B cell (primary cell): ENCODE measurements at regions of chrX and their contacts with region 1.

Region 1: DNA sequence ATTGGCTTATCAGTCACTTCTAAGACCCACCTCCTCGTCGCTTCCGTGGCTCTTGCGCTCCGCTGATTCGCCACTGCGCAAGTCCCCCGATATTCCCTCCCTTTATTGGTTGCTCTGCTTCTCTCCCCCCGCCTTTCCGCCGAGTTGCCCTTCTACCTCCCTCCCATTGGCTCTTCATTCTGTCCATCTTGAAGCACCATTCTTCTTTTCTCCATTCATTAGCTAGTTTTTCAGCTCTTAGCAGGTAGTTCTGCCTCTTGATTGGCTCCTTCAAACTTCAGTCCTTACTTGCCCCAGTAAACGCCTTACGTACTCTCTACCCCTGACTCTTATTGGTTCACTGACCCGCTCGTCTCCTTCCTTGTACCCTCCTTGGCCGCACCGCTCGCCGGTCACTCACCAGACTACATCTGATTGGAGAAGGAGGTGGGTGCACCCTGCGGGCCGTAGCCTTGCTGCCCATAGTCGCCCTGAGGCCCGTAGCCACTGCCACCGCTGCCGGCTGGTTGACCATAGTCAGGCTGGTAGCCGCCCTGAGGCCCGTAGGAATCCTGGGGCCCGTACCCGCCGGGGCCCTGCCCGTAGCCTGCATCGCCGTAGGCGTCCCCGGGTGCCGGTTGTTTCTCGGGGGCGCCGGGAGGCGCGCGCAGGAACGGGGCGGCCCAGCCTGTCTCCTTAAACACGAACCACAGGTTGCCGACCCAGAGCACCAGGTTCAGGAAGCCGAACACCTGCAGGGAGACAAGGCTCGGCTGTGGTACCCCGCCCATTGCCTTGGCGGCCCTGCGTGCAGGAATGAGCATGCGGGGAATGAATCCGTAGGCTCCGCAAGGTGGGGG is 5.1 kb upstream of the PRICKLE3 start:
- DNase-seq: peak; percentile 95
- ATAC-seq: peak; percentile 84
- H3K4me3 ChIP-seq: peak overlapping the region in 4 of 5 experiments; percentile 62 to 78 (median 70)
- H3K4me3 Mint-ChIP-seq: peak overlapping the region; percentile 95
- H3K27ac ChIP-seq: peak overlapping the region; percentile 55 to 71
- H3K27ac Mint-ChIP-seq: peak overlapping the region; percentile 96
- H3K4me1 ChIP-seq: peaks cover 0 to 20% of the 10 kb centered on the region in 2 donors
- H3K4me1 Mint-ChIP-seq: peaks cover 28% of the 10 kb centered on the region
- H3K27me3 ChIP-seq: no peaks in the 10 kb centered on the region
- H3K27me3 Mint-ChIP-seq: no peaks in the 10 kb centered on the region
- CTCF ChIP-seq: no peak

Region 2: GRCh38 chrX:49120099-49120498 is 71.2 kb before region 1 on chrX:
- CTCF ChIA-PET with region 1: no interaction called
- POLR2A ChIA-PET with region 1: no interaction called
- intact Hi-C with region 1: loop called (anchors 1 kb)
- DNase-seq: no peak
- ATAC-seq: no peak
- H3K4me3 ChIP-seq: no peak overlapping the region
- H3K4me3 Mint-ChIP-seq: peak overlapping the region; percentile 0
- H3K27ac ChIP-seq: no peak overlapping the region
- H3K27ac Mint-ChIP-seq: no peak overlapping the region
- H3K4me1 ChIP-seq: peaks cover 4 to 18% of the 10 kb centered on the region in 2 donors
- H3K4me1 Mint-ChIP-seq: peaks cover 29% of the 10 kb centered on the region
- H3K27me3 ChIP-seq: no peaks in the 10 kb centered on the region
- H3K27me3 Mint-ChIP-seq: no peaks in the 10 kb centered on the region
- CTCF ChIP-seq: no peak

Region 3: GRCh38 chrX:49137492-49137891 is 53.8 kb before region 1 on chrX:
- CTCF ChIA-PET with region 1: no interaction called
- POLR2A ChIA-PET with region 1: no interaction called
- intact Hi-C with region 1: no loop called
- DNase-seq: no peak
- ATAC-seq: no peak
- H3K4me3 ChIP-seq: no peak overlapping the region
- H3K4me3 Mint-ChIP-seq: no peak overlapping the region
- H3K27ac ChIP-seq: no peak overlapping the region
- H3K27ac Mint-ChIP-seq: no peak overlapping the region
- H3K4me1 ChIP-seq: no peaks in the 10 kb centered on the region
- H3K4me1 Mint-ChIP-seq: no peaks in the 10 kb centered on the region
- H3K27me3 ChIP-seq: no peaks in the 10 kb centered on the region
- H3K27me3 Mint-ChIP-seq: no peaks in the 10 kb centered on the region
- CTCF ChIP-seq: no peak

Region 4: DNA sequence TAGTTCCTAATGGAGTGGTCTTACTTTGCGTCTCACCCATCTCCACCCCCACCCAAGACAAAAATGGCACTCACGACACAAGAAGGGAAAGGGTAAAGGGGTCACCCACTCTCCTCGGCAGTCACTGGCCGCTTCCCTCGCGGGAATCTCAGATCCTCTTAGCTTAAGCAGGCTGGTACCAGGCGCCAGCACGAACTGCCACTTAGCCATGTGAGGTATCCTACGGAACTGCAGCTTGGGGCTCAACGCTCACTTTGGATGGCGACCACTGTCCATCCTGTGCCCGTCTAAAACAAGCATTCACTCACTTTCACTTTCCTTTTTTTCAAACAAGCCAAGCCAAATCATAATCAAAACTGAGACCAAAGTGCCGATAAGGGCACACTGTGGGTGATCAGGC is 43.3 kb before region 1 on chrX:
- CTCF ChIA-PET with region 1: no interaction called
- POLR2A ChIA-PET with region 1: no interaction called
- intact Hi-C with region 1: no loop called
- DNase-seq: no peak
- ATAC-seq: no peak
- H3K4me3 ChIP-seq: no peak overlapping the region
- H3K4me3 Mint-ChIP-seq: no peak overlapping the region
- H3K27ac ChIP-seq: no peak overlapping the region
- H3K27ac Mint-ChIP-seq: no peak overlapping the region
- H3K4me1 ChIP-seq: no peaks in the 10 kb centered on the region
- H3K4me1 Mint-ChIP-seq: no peaks in the 10 kb centered on the region
- H3K27me3 ChIP-seq: no peaks in the 10 kb centered on the region
- H3K27me3 Mint-ChIP-seq: no peaks in the 10 kb centered on the region
- CTCF ChIP-seq: no peak

Region 5: DNA sequence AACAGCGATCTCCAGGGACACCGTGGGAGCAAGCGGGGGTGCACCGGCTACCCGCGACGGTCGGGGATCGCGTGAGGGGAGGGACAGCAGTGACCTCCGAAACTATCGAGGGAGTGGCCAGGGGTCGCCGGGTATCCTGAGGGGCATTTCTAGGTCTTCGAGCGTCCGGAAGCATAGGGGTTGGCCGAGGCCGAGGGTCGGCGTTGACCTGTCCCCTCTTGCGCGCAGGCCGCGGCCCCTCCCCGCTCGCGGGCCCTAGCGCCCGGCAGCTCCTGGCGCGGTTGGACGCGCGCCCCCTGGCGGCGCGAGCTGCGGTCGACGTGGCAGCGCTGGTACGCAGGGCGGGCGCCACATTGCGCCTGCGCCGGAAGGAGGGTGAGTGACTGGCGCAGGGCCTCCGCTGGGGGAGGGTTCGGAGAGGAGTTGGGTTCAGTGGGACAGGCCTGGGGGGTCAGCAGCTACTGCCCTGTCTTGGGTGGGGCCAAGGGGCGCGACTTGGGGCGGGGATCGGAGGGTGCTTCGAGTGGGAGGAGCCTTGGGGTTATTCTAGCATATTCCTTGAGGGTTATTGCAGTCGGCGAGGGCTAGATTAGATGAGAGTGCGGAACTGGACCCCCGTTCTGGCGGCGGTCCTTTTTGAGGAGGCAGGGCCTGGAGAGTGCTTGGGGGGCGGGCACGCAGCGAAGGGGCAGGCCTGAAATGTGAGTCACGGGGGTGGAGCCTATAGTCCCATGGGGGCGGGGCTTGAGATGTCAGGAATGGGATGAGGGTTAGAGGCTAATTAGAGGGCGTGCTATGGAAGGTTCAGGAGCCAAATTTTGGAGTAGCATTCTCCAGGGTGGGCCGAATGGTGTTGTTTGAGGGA is 27.5 kb before region 1 on chrX:
- CTCF ChIA-PET with region 1: interaction called, 10 read pairs
- POLR2A ChIA-PET with region 1: interaction called, 9 read pairs
- intact Hi-C with region 1: loop called (anchors 1 kb)
- DNase-seq: peak; percentile 89
- ATAC-seq: peak; percentile 56
- H3K4me3 ChIP-seq: peak overlapping the region in 4 of 5 experiments; percentile 39 to 62 (median 46)
- H3K4me3 Mint-ChIP-seq: peak overlapping the region; percentile 86
- H3K27ac ChIP-seq: peak overlapping the region; percentile 79 to 82
- H3K27ac Mint-ChIP-seq: peak overlapping the region; percentile 96
- H3K4me1 ChIP-seq: peaks cover 5 to 38% of the 10 kb centered on the region in 2 donors
- H3K4me1 Mint-ChIP-seq: peaks cover 26% of the 10 kb centered on the region
- H3K27me3 ChIP-seq: no peaks in the 10 kb centered on the region
- H3K27me3 Mint-ChIP-seq: no peaks in the 10 kb centered on the region
- CTCF ChIP-seq: peak; percentile 67

Region 6: DNA sequence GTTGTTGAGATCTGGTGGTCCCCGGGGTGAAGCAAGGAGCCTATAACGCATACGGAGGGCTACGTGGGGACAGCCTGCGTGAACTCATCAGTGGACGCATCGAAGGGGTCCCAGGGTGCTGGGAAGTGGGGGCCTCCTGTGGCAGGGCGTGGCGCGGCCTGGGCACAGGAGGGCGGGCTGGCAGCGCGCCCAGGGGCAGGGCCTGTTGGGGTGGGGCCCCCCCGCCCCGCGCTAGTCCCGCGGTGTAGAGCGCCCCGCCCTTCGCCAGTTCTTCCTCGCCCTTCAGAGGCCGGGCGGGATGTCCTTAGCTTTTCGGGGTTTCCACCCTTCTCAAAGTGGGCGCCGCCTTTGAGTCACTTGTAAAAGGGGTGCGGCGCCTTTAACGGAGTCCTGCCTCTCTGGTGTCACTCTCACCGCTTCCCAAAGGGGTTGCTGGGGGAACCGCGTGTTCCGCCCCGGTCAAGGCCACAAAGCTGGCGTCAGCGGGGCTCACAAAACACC is 18.9 kb before region 1 on chrX:
- CTCF ChIA-PET with region 1: interaction called, 10 read pairs
- POLR2A ChIA-PET with region 1: interaction called, 13 read pairs
- intact Hi-C with region 1: loop called (anchors 1 kb)
- DNase-seq: peak; percentile 81
- ATAC-seq: peak; percentile 75
- H3K4me3 ChIP-seq: peak overlapping the region; percentile 53 to 74 (median 71)
- H3K4me3 Mint-ChIP-seq: peak overlapping the region; percentile 90
- H3K27ac ChIP-seq: peak overlapping the region; percentile 74 to 84
- H3K27ac Mint-ChIP-seq: peak overlapping the region; percentile 92
- H3K4me1 ChIP-seq: peaks cover 15 to 45% of the 10 kb centered on the region in 2 donors
- H3K4me1 Mint-ChIP-seq: peaks cover 44% of the 10 kb centered on the region
- H3K27me3 ChIP-seq: no peaks in the 10 kb centered on the region
- H3K27me3 Mint-ChIP-seq: no peaks in the 10 kb centered on the region
- CTCF ChIP-seq: no peak

Region 7: GRCh38 chrX:49230469-49231232 is 39.4 kb after region 1 on chrX:
- CTCF ChIA-PET with region 1: interaction called, 7 read pairs
- POLR2A ChIA-PET with region 1: interaction called, 3 read pairs
- intact Hi-C with region 1: loop called (anchors 2 kb)
- DNase-seq: peak; percentile 77
- ATAC-seq: peak; percentile 75
- H3K4me3 ChIP-seq: peak overlapping the region in 4 of 5 experiments; percentile 54 to 64 (median 60)
- H3K4me3 Mint-ChIP-seq: peak overlapping the region; percentile 89
- H3K27ac ChIP-seq: peak overlapping the region; percentile 87 to 88
- H3K27ac Mint-ChIP-seq: peak overlapping the region; percentile 97
- H3K4me1 ChIP-seq: peaks cover 5 to 21% of the 10 kb centered on the region in 2 donors
- H3K4me1 Mint-ChIP-seq: peaks cover 18% of the 10 kb centered on the region
- H3K27me3 ChIP-seq: no peaks in the 10 kb centered on the region
- H3K27me3 Mint-ChIP-seq: no peaks in the 10 kb centered on the region
- CTCF ChIP-seq: peak; percentile 36